ENCODE measurements at regions of chr15 and their contacts with region 1.

Region 1: DNA sequence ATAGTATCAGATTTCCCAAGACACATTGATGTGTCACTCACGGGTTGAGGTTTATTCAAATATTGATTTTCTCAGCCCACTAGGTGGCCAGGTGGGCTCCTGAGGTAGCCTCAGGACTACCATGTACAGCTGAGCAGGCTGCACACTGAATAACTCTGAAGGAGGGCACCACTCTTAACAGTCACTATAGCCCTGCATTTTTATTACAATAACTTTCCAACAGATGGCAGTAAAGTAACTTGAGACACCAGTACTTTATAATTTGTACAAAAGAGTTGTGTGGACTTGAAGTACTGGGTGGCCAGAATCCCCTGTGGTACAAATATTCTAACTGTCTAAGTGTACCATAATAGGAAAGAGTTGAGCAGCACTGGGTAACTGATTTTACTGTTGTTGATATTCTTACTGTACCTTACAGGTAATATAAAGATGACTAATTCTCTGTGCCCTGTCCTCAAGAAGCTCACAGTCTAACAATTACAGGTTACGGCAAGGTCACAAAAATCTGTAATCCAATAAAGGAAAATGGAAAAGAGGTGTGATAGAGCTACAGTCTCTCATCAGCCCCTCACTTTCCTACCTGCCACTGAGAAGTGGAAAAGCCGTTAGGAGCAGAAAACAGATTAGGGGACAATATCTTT is 76.0 kb downstream of the ETFA start:
- DNase-seq: peak; percentile 38
- H3K4me3 ChIP-seq: no peak overlapping the region
- H3K27ac ChIP-seq: no peak overlapping the region
- H3K4me1 ChIP-seq: peaks cover 0 to 2% of the 10 kb centered on the region in 2 experiments; a peak in 3 of 4 replicates
- H3K27me3 ChIP-seq: no peaks in the 10 kb centered on the region
- CTCF ChIP-seq: peak; percentile 65
- EP300 ChIP-seq: no peak
- RAD21 ChIP-seq: peak; percentile 71

Region 2: DNA sequence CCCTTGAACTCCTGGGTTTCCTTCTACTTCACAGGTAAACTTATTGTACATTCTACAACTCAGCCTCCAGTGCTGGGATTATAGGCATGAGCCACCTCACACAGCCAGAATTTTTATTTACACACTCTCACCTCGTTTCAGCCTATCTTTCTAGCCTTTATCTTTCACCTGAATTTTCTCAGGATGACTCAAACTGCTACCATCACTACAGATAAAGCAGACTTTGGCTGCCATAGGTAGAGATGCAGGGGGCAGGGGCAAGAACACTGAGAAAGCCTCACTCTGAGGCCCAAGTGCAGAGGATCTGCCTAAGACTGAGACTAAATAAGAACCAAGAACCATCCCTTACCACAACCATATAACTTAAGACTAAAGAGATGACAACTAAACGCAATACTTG is 16.9 kb after region 1 on chr15:
- CTCF ChIA-PET with region 1: interaction called, 11 read pairs
- POLR2A ChIA-PET with region 1: no interaction called
- DNase-seq: no peak
- H3K4me3 ChIP-seq: no peak overlapping the region
- H3K27ac ChIP-seq: no peak overlapping the region
- H3K4me1 ChIP-seq: no peaks in the 10 kb centered on the region
- H3K27me3 ChIP-seq: no peaks in the 10 kb centered on the region
- CTCF ChIP-seq: no peak
- EP300 ChIP-seq: no peak
- RAD21 ChIP-seq: no peak

Region 3: DNA sequence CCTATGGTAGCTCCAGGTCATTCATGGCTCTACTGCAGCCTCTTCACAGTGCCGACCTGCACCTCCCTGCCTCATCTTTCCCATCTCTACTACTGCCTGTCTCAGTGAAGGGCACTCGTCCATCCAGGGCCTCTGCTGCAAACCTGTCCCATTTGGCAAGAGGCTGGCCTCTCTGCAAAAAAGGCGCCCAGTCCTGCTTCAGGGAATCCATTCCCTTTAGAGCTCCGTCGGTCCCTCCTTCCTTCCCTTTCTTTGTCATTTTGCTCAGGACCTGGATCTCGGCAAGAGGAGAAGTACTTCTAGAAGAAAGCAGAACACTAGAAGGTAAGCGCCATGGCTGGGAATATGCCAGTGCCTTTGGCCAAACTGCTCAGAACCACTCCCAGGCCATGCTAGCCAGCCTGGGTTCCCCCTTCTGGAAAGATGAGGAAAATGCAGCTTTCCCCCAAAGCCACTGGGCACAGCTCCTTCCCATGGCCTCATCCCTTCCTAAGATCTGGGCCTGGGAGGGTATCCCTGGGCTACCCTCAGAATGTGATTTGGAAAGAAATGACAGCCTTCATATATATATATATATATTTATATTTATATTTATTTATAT is 94.9 kb after region 1 on chr15:
- CTCF ChIA-PET with region 1: interaction called, 16 read pairs
- POLR2A ChIA-PET with region 1: no interaction called
- DNase-seq: peak; percentile 71
- H3K4me3 ChIP-seq: no peak overlapping the region
- H3K27ac ChIP-seq: no peak overlapping the region
- H3K4me1 ChIP-seq: peaks cover 0 to 5% of the 10 kb centered on the region in 2 experiments; a peak in 1 of 4 replicates
- H3K27me3 ChIP-seq: no peaks in the 10 kb centered on the region
- CTCF ChIP-seq: peak; percentile 52
- EP300 ChIP-seq: no peak
- RAD21 ChIP-seq: peak; percentile 67

Region 4: GRCh38 chr15:76336254-76337058 is 101.2 kb after region 1 on chr15 and contains the start of gene ISL2:
- CTCF ChIA-PET with region 1: interaction called, 13 read pairs
- POLR2A ChIA-PET with region 1: no interaction called
- DNase-seq: peak; percentile 99
- H3K4me3 ChIP-seq: peak within 1 kb of the TSS; percentile 54 to 74
- H3K27ac ChIP-seq: peak within 1 kb of the TSS; percentile 95 to 99
- H3K4me1 ChIP-seq: peaks cover 4 to 26% of the 10 kb centered on the region in 2 experiments; a peak in 2 of 4 replicates
- H3K27me3 ChIP-seq: no peaks in the 10 kb centered on the region
- CTCF ChIP-seq: no peak
- EP300 ChIP-seq: no peak; a peak in 1 of 4 replicates
- RAD21 ChIP-seq: no peak
- polyA plus RNA-seq, gene ISL2: 3.5 and 6.0 TPM in 2 replicates